CD4-positive, alpha-beta T cell (primary cell): ENCODE measurements at regions of chr2 and their contacts with region 1.

Region 1: GRCh38 chr2:8681786-8682692 is at the start of gene ID2:
- DNase-seq: peak; percentile 97 to 99 (median 98)
- ATAC-seq: peak; percentile 73
- H3K4me3 ChIP-seq: peak within 1 kb of the TSS; percentile 77
- H3K4me3 Mint-ChIP-seq: peak within 1 kb of the TSS; percentile 99
- H3K27ac ChIP-seq: peak within 1 kb of the TSS; percentile 37 to 52
- H3K27ac Mint-ChIP-seq: peak within 1 kb of the TSS; percentile 89
- H3K4me1 ChIP-seq: peaks cover 46% of the 10 kb centered on the region
- H3K4me1 Mint-ChIP-seq: peaks cover 54% of the 10 kb centered on the region
- H3K27me3 ChIP-seq: peaks cover 12 to 23% of the 10 kb centered on the region in 2 experiments
- H3K27me3 Mint-ChIP-seq: peaks cover 20% of the 10 kb centered on the region
- CTCF ChIP-seq: no peak
- total RNA-seq, gene ID2: 238 to 242 TPM

Region 2: DNA sequence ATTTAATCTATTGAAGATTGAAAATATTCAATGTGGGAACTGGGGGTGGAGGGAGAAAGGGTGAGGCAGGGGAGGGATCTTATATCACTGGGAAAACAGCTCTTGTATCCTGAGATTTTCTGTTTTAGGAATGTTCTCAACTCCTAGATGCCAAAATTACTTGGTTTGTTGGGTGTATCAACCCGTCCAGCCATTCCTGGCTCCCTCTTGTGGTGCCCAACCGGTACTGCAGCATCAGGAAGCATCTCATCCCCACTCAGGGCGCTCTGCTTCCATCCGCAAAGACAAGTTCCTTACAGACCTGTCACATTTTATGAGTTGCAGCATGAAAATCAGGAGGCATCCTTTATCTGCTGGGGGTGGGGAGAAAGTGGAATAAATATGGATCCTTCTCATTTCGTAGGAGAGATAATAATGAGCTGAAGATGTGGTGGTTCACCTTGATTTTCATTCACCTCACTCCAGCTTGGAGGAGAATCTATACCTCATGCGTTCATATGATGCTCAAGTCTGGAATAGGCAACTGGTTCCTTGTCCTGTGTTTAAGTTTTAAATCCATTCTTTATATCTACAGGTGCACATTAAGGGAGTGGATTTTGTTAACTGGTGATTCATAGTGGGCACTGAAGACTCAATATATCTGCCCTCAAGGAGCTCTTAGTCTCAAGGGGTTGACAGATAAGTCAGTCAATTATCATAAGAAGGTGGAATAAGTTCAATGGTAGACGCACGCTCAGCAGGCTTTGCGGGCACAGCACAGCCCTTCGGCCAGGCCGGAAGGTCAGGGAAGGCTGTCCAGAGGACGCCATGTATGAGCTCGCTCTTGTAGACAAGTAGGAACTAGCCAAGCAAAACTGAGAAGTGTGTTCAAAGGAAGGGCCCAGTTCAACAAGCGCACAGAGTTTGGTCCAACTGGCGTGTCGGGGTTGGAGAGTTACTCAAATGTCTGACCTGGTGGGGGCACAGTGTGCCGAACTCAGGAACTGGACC is 1637.5 kb before region 1 on chr2:
- CTCF ChIA-PET with region 1: no interaction called
- POLR2A ChIA-PET with region 1: no interaction called
- intact Hi-C with region 1: loop called (anchors 2 to 5 kb)
- DNase-seq: peak; percentile 36 to 81 (median 59)
- ATAC-seq: peak; percentile 86
- H3K4me3 ChIP-seq: no peak overlapping the region
- H3K4me3 Mint-ChIP-seq: no peak overlapping the region
- H3K27ac ChIP-seq: no peak overlapping the region
- H3K27ac Mint-ChIP-seq: peak overlapping the region; percentile 38
- H3K4me1 ChIP-seq: peaks cover 11% of the 10 kb centered on the region
- H3K4me1 Mint-ChIP-seq: peaks cover 37% of the 10 kb centered on the region
- H3K27me3 ChIP-seq: no peaks in the 10 kb centered on the region
- H3K27me3 Mint-ChIP-seq: no peaks in the 10 kb centered on the region
- CTCF ChIP-seq: peak; percentile 97

Region 3: DNA sequence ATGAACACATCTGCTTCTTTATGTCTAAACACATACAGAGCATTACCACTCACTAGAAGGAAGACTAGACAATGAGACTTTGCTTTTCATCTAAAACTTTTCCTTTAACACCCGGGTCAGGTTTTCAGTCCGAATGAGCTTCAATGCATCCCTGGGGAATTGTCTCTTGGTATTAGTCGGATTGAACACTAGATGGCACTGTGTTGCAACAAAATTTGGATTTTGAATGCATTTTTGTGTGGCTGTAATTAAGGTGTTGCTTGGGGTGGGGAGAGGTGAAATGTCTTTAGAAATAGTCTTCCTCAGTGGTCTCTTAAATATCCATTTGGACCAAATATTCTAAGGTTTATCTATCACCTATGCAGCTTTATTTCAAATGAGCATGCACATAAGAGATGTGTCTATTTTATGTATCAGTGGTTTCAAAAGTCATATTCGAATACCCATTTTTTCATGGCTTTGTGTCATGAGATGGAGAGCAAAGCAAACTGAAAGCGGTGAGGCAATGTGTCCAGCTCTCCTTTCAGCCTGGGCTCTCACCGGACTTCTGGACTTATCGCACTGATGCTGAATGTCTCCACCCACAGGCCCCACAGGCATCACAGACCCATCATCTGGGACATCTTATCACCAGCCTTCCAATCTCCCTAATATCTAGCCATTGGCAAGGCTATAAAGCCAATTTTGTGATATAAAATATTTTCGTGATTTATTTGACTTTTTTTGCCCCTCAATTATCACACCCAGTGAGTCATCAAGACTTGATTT is 1254.6 kb before region 1 on chr2:
- CTCF ChIA-PET with region 1: interaction called, 11 read pairs
- POLR2A ChIA-PET with region 1: interaction called, 23 read pairs
- intact Hi-C with region 1: loop called (anchors 1 kb)
- DNase-seq: peak in 6 of 14 experiments; percentile 5 to 81 (median 58)
- ATAC-seq: peak; percentile 60
- H3K4me3 ChIP-seq: no peak overlapping the region
- H3K4me3 Mint-ChIP-seq: no peak overlapping the region
- H3K27ac ChIP-seq: no peak overlapping the region
- H3K27ac Mint-ChIP-seq: peak overlapping the region; percentile 22
- H3K4me1 ChIP-seq: peaks cover 36% of the 10 kb centered on the region
- H3K4me1 Mint-ChIP-seq: peaks cover 45% of the 10 kb centered on the region
- H3K27me3 ChIP-seq: no peaks in the 10 kb centered on the region
- H3K27me3 Mint-ChIP-seq: no peaks in the 10 kb centered on the region
- CTCF ChIP-seq: peak; percentile 87

Region 4: GRCh38 chr2:7672027-7672684 is 1009.9 kb before region 1 on chr2:
- CTCF ChIA-PET with region 1: no interaction called
- POLR2A ChIA-PET with region 1: no interaction called
- intact Hi-C with region 1: loop called in 1 of 2 experiments (anchors 5 kb)
- DNase-seq: peak; percentile 5 to 75 (median 39)
- ATAC-seq: peak; percentile 44
- H3K4me3 ChIP-seq: no peak overlapping the region
- H3K4me3 Mint-ChIP-seq: peak overlapping the region; percentile 57
- H3K27ac ChIP-seq: no peak overlapping the region
- H3K27ac Mint-ChIP-seq: peak overlapping the region; percentile 69
- H3K4me1 ChIP-seq: peaks cover 25% of the 10 kb centered on the region
- H3K4me1 Mint-ChIP-seq: peaks cover 32% of the 10 kb centered on the region
- H3K27me3 ChIP-seq: no peaks in the 10 kb centered on the region
- H3K27me3 Mint-ChIP-seq: no peaks in the 10 kb centered on the region
- CTCF ChIP-seq: peak; percentile 74

Region 5: DNA sequence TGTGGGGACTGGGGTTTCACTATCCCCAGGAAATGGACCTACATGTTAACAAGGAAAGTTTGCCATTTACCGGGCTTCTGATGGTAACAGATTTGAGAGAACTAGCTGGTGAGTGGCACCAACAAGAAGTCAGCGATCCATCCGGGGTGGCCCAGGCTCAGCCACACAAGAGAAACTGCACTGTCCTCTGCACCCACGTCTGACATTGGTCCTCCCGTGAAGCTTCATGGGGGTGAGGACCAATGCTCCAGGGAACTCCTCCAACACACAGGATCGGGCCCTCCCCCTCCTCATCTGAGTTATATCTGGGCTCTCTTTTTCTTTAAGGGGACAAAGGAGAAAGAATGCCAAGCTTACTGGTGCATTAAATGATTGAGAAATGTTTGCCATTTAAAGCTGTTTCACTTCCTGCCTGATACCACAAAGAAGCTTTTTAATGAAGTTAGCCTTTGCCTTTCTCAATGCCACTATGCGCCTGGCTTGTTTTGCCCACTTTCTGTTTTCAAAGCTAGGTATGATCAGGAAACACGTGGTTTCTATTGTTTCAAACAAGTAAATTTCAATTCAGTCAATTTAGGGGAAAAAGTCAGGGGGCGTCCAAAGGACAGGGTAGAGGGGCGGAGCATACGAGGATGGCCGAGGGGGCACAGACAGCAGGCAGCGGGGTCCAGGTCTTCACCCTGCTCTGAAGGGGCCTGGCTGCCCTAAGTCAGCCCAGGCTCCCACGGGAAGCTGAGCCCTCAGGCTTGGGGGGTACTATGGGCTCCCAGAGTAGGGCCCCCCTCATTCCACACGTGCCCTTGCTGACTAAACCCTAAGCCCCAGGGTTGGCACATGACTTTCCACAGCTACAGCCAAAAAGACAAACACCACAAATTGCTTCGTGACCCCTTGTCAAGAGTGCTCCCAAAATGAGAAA is 204.2 kb before region 1 on chr2:
- CTCF ChIA-PET with region 1: no interaction called
- POLR2A ChIA-PET with region 1: interaction called, 23 read pairs
- intact Hi-C with region 1: loop called (anchors 5 kb)
- DNase-seq: peak in 5 of 14 experiments; percentile 32 to 78 (median 63)
- ATAC-seq: peak; percentile 49
- H3K4me3 ChIP-seq: peak overlapping the region; percentile 41
- H3K4me3 Mint-ChIP-seq: peak overlapping the region; percentile 49
- H3K27ac ChIP-seq: peak overlapping the region; percentile 32 to 83
- H3K27ac Mint-ChIP-seq: peak overlapping the region; percentile 80
- H3K4me1 ChIP-seq: peaks cover 87% of the 10 kb centered on the region
- H3K4me1 Mint-ChIP-seq: peaks cover 76% of the 10 kb centered on the region
- H3K27me3 ChIP-seq: no peaks in the 10 kb centered on the region
- H3K27me3 Mint-ChIP-seq: no peaks in the 10 kb centered on the region
- CTCF ChIP-seq: no peak

Region 6: DNA sequence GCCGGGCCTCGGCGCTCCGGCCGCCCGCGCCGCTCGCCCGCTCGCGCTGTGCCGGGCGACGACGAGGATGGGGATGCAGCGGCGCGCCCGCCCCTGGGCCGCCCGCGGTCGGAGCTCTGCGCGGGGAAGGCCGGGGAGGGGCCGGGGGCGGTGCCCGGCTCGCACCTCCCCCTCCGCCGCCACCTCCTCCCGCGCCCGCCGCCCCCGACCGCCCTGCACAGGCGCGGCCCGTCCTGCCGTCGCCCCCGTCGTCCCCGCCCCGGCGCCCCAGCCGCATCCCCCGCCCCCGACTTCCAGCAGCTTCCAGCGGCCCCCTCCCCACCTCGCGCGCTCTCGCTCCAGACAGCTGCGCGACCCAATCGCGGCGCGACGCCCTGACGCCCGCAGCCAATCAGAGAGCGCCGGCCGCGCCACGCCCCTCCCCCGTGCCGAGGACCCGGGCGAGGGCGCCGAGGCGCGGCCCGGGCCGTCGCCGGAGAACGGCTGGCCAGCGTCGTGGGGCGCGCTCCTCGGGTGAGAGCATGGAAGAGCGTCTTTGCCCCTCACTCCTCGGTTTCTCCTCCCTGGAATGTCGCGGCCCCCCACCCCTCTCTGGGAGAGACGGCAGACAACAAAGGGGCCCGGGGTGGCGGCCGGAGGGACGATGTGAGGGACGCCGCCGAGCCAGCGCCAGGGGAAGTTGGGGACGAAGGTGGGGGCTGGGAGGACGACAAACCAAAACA is 321.7 kb after region 1 on chr2 and contains the start of gene MBOAT2:
- CTCF ChIA-PET with region 1: no interaction called
- POLR2A ChIA-PET with region 1: no interaction called
- intact Hi-C with region 1: loop called in 1 of 2 experiments (anchors 5 kb)
- DNase-seq: peak; percentile 56 to 91 (median 72)
- ATAC-seq: peak; percentile 85
- H3K4me3 ChIP-seq: peak within 1 kb of the TSS; percentile 74
- H3K4me3 Mint-ChIP-seq: peak within 1 kb of the TSS; percentile 91
- H3K27ac ChIP-seq: peak within 1 kb of the TSS in 1 of 2 donors; percentile 35
- H3K27ac Mint-ChIP-seq: peak within 1 kb of the TSS; percentile 82
- H3K4me1 ChIP-seq: peaks cover 15% of the 10 kb centered on the region
- H3K4me1 Mint-ChIP-seq: peaks cover 26% of the 10 kb centered on the region
- H3K27me3 ChIP-seq: no peaks in the 10 kb centered on the region
- H3K27me3 Mint-ChIP-seq: no peaks in the 10 kb centered on the region
- CTCF ChIP-seq: no peak
- total RNA-seq, gene MBOAT2: 1.9 to 2.0 TPM